PC-9 (cell line): ENCODE measurements at regions of chr6 and their contacts with region 1.

Region 1: GRCh38 chr6:37791156-37791919 is 28.2 kb upstream of the ZFAND3 start:
- DNase-seq: peak; percentile 93
- H3K4me3 ChIP-seq: no peak overlapping the region
- H3K27ac ChIP-seq: no peak overlapping the region
- H3K4me1 ChIP-seq: peaks cover 16% of the 10 kb centered on the region
- H3K27me3 ChIP-seq: no peaks in the 10 kb centered on the region
- CTCF ChIP-seq: peak; percentile 95

Region 2: DNA sequence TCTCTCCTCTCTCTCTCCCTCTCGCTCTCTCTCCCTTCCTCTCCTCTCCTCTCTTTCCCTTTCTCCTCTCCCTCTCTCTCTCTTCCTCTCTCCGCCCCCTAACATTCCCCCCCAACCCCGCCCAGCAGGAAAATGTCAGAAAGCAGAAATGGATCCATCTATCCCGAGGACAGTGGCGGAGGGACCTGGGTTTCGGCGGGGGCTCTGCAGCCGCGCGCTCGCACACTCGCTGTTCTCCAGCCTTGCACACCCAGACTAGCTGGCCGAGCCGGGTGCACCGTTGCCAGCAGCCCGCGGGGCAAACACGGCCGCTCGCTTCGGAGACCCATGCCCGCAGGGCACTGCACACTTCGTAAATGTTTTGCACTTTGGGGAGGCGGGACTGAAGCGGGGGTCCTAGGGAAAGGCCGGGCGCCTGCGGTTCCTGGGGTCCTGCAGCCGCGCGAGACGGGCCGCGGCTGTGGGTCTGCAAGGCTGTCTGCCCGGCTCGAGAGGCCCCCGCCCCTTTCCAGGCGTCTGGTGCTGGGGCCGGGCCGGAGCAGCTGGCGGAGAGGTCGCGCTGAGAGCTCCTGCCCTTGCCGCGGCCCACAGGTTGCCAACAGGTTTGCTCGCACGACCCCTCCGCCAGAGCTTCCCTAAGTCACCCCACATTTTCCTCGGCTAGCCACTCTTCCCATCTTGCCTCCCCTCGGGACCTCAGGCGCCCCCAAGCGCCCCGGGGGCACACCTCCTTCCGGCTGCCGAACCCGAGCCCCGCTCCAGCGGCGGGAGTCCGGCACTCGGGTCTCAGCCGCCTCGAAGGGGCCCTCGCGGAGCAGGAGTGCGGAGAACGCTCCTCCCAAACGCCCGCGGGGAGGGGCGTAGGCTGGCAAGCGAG is 92.8 kb before region 1 on chr6:
- CTCF ChIA-PET with region 1: interaction called, 3 read pairs
- POLR2A ChIA-PET with region 1: no interaction called
- intact Hi-C with region 1: loop called (anchors 2 kb)
- DNase-seq: peak; percentile 51 to 83
- H3K4me3 ChIP-seq: peak overlapping the region; percentile 77
- H3K27ac ChIP-seq: no peak overlapping the region
- H3K4me1 ChIP-seq: no peaks in the 10 kb centered on the region; the same call in 1 of the 2 replicates
- H3K27me3 ChIP-seq: peaks cover 42% of the 10 kb centered on the region
- CTCF ChIP-seq: peak; percentile 62; the same call in 1 of the 2 replicates

Region 3: GRCh38 chr6:37858363-37858762 is 67.0 kb after region 1 on chr6:
- CTCF ChIA-PET with region 1: interaction called, 4 read pairs
- POLR2A ChIA-PET with region 1: no interaction called
- intact Hi-C with region 1: loop called (anchors 2 kb)
- DNase-seq: no peak
- H3K4me3 ChIP-seq: no peak overlapping the region
- H3K27ac ChIP-seq: no peak overlapping the region
- H3K4me1 ChIP-seq: peaks cover 14% of the 10 kb centered on the region
- H3K27me3 ChIP-seq: no peaks in the 10 kb centered on the region
- CTCF ChIP-seq: no peak

Region 4: DNA sequence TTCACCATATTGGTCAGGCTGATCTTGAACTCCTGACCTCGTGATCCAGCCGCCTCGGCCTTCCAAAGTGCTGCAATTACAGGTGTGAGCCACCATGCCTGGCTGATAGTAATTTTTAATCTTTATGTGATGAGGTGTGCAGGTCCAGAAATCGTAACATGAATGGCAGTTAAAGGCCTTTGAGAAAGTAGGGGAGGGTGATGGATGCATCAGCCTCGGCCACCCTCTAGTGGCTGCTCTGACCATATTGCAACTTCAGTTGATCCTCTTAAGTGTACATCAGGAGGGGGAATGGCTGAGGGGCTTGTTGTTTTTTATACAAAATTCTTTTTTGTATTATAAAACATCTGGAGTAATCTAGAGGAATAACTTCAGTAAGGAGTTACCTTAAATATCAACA is 221.2 kb after region 1 on chr6:
- CTCF ChIA-PET with region 1: no interaction called
- POLR2A ChIA-PET with region 1: no interaction called
- intact Hi-C with region 1: loop called (anchors 10 kb)
- DNase-seq: no peak
- H3K4me3 ChIP-seq: no peak overlapping the region
- H3K27ac ChIP-seq: no peak overlapping the region
- H3K4me1 ChIP-seq: no peaks in the 10 kb centered on the region
- H3K27me3 ChIP-seq: no peaks in the 10 kb centered on the region
- CTCF ChIP-seq: peak; percentile 82

Region 5: GRCh38 chr6:38542031-38542430 is 750.7 kb after region 1 on chr6:
- CTCF ChIA-PET with region 1: interaction called, 12 read pairs
- POLR2A ChIA-PET with region 1: no interaction called
- intact Hi-C with region 1: no loop called
- DNase-seq: no peak
- H3K4me3 ChIP-seq: no peak overlapping the region
- H3K27ac ChIP-seq: no peak overlapping the region
- H3K4me1 ChIP-seq: no peaks in the 10 kb centered on the region
- H3K27me3 ChIP-seq: no peaks in the 10 kb centered on the region
- CTCF ChIP-seq: no peak